Prostate gland (tissue), 2 donors: ENCODE measurements at regions of chr4 and their contacts with region 1.

Region 1: DNA sequence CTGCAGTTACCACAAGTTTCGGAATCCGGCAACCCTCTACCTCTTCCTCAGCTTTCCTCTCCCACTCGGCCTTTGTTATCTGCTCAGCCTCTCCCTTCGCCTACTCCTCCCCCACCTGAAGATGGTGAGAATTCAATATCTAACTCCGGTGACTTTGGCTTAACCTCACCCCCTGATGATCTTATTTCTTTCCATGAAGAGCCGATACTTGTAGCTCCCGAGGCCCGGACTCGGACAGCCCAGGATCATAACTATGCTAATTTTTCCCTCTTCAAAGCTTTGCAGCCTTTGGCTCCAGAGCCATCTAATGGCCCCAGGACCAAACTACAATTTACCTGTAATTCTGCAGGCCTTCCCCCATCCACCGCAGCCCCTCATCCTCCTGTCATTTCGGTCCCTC is 32.0 kb upstream of the MGST2 start:
- DNase-seq: peak; percentile 27
- H3K4me3 ChIP-seq: peak overlapping the region in 1 of 2 donors; percentile 1
- H3K27ac ChIP-seq: no peak overlapping the region
- H3K4me1 ChIP-seq: no peaks in the 10 kb centered on the region
- H3K27me3 ChIP-seq: no peaks in the 10 kb centered on the region
- CTCF ChIP-seq: peak in 3 of 4 experiments; percentile 21 to 57 (median 48)
- POLR2A ChIP-seq: no peak

Region 2: GRCh38 chr4:139416073-139416673 is 217.5 kb before region 1 on chr4:
- intact Hi-C with region 1: loop called (anchors 10 kb)
- DNase-seq: no peak
- H3K4me3 ChIP-seq: no peak overlapping the region
- H3K27ac ChIP-seq: no peak overlapping the region
- H3K4me1 ChIP-seq: no peaks in the 10 kb centered on the region
- H3K27me3 ChIP-seq: no peaks in the 10 kb centered on the region
- CTCF ChIP-seq: peak in 3 of 4 experiments; percentile 52 to 75 (median 67)
- POLR2A ChIP-seq: no peak

Region 3: DNA sequence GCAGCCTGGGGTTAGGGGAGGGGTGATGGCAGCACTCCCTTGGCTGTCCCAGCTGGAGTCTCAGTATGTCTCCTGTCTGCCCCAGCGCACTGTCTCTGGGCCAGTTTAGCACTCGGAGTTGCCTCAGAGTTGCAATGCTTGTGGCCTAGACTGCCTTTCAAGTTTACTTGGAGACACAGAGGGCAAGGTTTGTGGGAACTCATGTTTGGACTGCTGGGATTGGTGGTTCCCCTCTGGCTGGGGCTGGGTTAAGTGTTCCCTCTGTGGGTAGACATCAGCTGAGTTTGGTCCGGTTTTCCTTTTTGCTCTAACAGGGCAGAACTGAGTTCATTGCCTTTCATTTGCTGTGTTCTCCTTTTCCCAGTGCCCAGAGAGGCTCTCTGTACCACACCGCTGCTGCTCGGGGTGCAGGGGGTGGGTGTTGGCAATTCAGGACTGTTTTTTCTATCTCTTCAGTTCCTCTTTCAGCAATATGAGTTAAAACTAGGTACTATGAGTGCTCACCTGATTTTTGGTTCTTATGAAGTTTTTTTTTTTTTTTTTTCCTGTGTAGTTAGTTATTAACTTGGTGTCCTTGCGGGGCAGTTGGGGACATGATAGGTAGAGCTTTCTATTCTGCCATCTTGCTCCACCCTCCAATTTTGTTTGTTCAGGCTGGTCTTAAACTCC is 162.5 kb before region 1 on chr4:
- intact Hi-C with region 1: no loop called
- DNase-seq: no peak
- H3K4me3 ChIP-seq: no peak overlapping the region
- H3K27ac ChIP-seq: no peak overlapping the region
- H3K4me1 ChIP-seq: no peaks in the 10 kb centered on the region
- H3K27me3 ChIP-seq: no peaks in the 10 kb centered on the region
- CTCF ChIP-seq: no peak
- POLR2A ChIP-seq: no peak

Region 4: DNA sequence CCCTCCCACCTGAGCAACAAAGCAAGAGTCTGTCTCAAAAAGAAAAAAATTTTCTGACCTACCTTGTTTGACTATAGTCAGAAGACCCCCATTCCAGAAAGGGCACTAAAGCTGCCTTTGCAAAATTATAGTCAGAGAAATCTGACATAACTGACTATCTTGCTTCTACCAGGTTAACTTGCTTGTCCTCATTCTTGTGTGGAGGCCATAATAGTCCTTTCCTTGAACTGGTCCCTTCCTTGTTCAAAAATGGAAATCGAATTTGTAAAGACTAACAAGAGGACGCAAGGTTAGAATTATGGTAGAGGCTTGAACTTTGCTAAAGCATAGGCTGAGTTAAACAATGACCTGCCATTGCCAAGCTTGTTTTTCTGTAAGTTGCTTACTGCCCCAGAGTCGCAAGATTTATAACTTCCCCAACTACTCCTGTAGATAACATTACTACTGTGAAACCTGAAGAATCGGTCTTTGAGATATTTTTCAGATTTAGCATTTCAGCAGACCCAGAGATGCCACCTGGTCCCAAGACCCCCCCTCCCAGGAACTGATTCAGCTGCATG is 134.6 kb before region 1 on chr4:
- intact Hi-C with region 1: loop called (anchors 5 kb)
- DNase-seq: no peak
- H3K4me3 ChIP-seq: no peak overlapping the region
- H3K27ac ChIP-seq: no peak overlapping the region
- H3K4me1 ChIP-seq: no peaks in the 10 kb centered on the region
- H3K27me3 ChIP-seq: no peaks in the 10 kb centered on the region
- CTCF ChIP-seq: no peak
- POLR2A ChIP-seq: no peak

Region 5: GRCh38 chr4:139596024-139596679 is 37.5 kb before region 1 on chr4:
- intact Hi-C with region 1: loop called (anchors 2 kb)
- DNase-seq: no peak
- H3K4me3 ChIP-seq: no peak overlapping the region
- H3K27ac ChIP-seq: no peak overlapping the region
- H3K4me1 ChIP-seq: no peaks in the 10 kb centered on the region
- H3K27me3 ChIP-seq: no peaks in the 10 kb centered on the region
- CTCF ChIP-seq: no peak
- POLR2A ChIP-seq: no peak